ENCODE measurements at regions of chr14 and their contacts with region 1.

Region 1: DNA sequence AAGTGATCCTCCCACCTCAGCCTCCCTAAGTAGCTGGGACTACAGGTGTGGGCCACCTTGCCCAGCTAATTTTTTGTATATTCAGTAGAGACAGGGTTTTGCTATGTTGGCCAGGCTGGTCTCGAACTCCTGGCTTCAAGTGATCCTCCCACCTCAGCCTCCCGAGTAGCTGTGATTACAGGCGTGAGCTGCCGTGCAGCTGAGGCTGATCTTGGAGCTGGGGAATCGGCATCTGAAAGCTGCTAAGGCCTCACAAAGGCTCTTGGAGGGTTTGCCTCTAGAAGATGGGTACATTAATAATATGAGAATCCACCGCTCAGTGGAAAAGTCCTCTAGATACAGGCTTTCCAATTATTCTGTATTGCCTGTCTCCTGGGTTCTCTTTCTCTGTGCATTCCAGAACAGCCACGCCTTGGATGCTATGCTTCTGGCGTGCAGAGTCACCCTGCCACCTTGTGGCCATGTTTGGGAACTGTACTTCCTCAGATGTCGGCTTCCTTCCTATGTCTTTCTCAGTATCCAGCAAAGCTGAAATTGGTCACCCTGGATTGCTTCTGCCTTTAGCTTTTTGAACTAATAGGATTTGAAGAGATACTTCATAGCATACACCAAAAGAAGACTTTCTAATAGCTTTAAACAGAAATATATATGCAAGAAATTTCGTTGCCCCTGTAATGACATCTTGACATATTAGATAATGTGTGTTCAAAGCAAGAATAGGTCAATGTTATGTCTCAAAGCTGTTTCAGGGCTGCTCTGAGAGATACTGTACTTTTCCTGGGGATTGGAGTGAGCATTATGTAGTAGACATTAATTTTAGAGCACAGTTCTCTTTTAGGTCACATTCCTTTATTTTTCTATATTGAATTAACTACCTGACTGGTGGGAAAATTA is 75.4 kb downstream of the SNAPC1 start:
- DNase-seq: peak; percentile 80
- ATAC-seq: peak; percentile 92
- H3K4me3 ChIP-seq: no peak overlapping the region
- H3K27ac ChIP-seq: no peak overlapping the region
- H3K4me1 ChIP-seq: no peaks in the 10 kb centered on the region; the same call in 1 of the 2 replicates
- H3K27me3 ChIP-seq: no peaks in the 10 kb centered on the region
- CTCF ChIP-seq: peak; percentile 95
- POLR2A ChIP-seq: 0 out of 2 replicates have a peak, but pooled peaks have one; percentile 39
- RAD21 ChIP-seq: peak; percentile 98

Region 2: DNA sequence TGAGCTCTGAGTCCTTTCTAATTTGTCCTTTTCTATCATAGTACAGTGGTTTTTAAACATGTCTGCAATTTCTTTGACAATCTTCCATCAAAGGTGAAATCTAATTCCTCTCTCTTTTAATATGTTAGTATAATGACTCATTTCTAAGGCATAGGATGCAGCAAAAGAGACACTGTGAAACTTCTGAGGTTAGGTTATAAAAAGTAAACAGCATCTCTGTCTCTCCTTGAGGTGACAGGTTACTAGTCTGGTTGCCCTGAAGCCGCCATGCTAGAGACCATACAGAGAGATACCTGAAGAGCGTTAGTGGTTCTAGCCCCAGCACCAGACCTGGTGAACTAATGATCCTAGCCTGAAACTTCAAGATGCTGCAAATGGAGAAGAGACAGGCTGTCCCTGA is 1474.3 kb before region 1 on chr14:
- CTCF ChIA-PET with region 1: no interaction called
- POLR2A ChIA-PET with region 1: no interaction called
- dilution Hi-C with region 1: no loop called
- in situ Hi-C with region 1: no loop called
- intact Hi-C with region 1: loop called (anchors 10 kb)
- DNase-seq: no peak
- ATAC-seq: no peak
- H3K4me3 ChIP-seq: no peak overlapping the region
- H3K27ac ChIP-seq: no peak overlapping the region
- H3K4me1 ChIP-seq: no peaks in the 10 kb centered on the region
- H3K27me3 ChIP-seq: peaks cover 2% of the 10 kb centered on the region
- CTCF ChIP-seq: no peak
- POLR2A ChIP-seq: no peak
- RAD21 ChIP-seq: no peak

Region 3: DNA sequence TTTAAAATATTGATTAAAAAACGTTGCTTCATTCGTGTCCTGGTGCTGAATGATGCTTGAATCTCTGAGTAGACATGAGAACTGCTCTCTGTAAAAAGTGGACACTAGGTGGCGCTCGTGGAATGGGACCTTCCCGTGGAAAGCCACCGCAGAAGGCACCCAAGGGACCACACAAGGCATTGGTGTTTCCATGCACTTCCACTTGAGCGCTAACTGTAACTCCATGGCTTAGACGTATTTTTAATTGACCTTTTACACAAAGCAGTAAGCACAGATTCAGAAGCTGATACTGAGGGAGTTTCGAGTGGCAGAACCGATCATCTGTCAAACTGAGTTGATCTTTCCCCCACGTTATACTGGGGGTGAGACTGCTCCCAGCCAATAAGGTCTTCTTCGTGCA is 380.9 kb before region 1 on chr14:
- CTCF ChIA-PET with region 1: interaction called, 16 read pairs
- POLR2A ChIA-PET with region 1: no interaction called
- dilution Hi-C with region 1: no loop called
- in situ Hi-C with region 1: loop called (anchors 5 kb)
- intact Hi-C with region 1: loop called (anchors 1 kb)
- DNase-seq: peak; percentile 73
- ATAC-seq: peak; percentile 91
- H3K4me3 ChIP-seq: no peak overlapping the region
- H3K27ac ChIP-seq: no peak overlapping the region
- H3K4me1 ChIP-seq: no peaks in the 10 kb centered on the region
- H3K27me3 ChIP-seq: peaks cover 19% of the 10 kb centered on the region
- CTCF ChIP-seq: peak; percentile 87
- POLR2A ChIP-seq: peak; percentile 35; the same call in 1 of the 2 replicates
- RAD21 ChIP-seq: peak; percentile 91

Region 4: GRCh38 chr14:61553725-61554641 is 283.6 kb before region 1 on chr14:
- CTCF ChIA-PET with region 1: no interaction called
- POLR2A ChIA-PET with region 1: no interaction called
- dilution Hi-C with region 1: no loop called
- in situ Hi-C with region 1: no loop called
- intact Hi-C with region 1: loop called (anchors 10 kb)
- DNase-seq: peak; percentile 98
- ATAC-seq: peak; percentile 88
- H3K4me3 ChIP-seq: no peak overlapping the region
- H3K27ac ChIP-seq: peak overlapping the region; percentile 93
- H3K4me1 ChIP-seq: peaks cover 30% of the 10 kb centered on the region
- H3K27me3 ChIP-seq: no peaks in the 10 kb centered on the region
- CTCF ChIP-seq: no peak
- POLR2A ChIP-seq: no peak
- RAD21 ChIP-seq: peak; percentile 38

Region 5: DNA sequence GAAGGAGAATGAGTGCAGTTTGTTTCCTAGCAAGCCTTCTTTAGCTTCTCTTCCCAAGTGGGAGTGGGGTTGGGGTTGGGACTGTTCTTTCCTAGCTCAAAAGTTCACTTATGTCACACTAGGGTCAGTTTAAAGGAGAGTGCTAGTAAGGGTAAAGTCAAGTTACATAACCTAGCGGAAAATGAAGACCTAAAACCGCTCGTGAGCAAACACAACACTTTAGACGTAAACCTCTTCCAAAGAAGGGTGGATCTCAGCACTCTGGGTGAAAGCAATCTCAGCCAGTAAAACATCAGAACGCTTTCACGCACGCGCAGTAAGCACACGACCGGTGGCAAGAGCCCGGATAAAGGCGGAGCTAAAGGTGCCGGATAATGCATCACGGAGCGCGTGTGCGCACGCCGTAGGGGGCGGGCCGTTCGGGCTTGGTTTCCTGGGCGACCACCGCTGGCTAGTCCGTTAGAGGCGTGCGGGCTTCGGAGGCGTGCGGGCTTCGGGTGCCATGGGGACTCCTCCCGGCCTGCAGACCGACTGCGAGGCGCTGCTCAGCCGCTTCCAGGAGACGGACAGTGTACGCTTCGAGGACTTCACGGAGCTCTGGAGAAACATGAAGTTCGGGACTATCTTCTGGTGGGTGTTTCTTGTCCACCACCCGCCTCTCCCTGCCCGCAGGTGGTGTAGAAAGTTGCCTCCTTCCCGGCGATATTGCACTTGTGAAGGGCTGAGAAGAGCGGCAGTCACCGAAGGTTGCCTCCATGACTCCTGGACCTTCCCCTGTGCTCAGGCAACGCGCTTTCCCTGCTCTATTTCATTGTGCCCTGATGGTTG is 75.4 kb before region 1 on chr14 and contains the start of gene SNAPC1:
- CTCF ChIA-PET with region 1: interaction called, 4 read pairs
- POLR2A ChIA-PET with region 1: no interaction called
- dilution Hi-C with region 1: no loop called
- in situ Hi-C with region 1: no loop called
- intact Hi-C with region 1: loop called (anchors 2 kb)
- DNase-seq: peak; percentile 97
- ATAC-seq: peak; percentile 99
- H3K4me3 ChIP-seq: peak within 1 kb of the TSS; percentile 82
- H3K27ac ChIP-seq: peak within 1 kb of the TSS; percentile 74
- H3K4me1 ChIP-seq: peaks cover 8% of the 10 kb centered on the region
- H3K27me3 ChIP-seq: no peaks in the 10 kb centered on the region
- CTCF ChIP-seq: no peak
- POLR2A ChIP-seq: peak; percentile 92
- RAD21 ChIP-seq: no peak
- total RNA-seq, gene SNAPC1: 7.7 and 18.9 TPM in 2 replicates

Region 6: DNA sequence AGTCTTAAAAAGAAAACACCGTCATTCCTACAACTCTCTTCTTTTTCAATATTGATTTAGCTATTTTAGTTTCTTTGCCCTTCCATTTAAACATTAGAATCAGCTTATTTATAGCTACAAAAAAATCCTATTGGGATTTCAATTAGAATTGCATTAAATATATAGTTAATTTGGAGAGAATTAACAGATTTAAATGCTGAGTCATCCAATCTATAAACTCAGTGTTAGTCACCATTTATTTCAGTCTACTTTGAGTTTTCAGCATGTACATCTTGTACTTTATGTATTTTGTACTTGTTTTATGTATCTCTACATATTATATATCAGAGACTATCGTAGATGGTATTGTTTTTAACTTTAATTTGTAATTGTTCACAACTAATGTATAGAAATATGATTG is 747.7 kb after region 1 on chr14:
- CTCF ChIA-PET with region 1: no interaction called
- POLR2A ChIA-PET with region 1: no interaction called
- dilution Hi-C with region 1: no loop called
- in situ Hi-C with region 1: no loop called
- intact Hi-C with region 1: no loop called
- DNase-seq: no peak
- ATAC-seq: no peak
- H3K4me3 ChIP-seq: no peak overlapping the region
- H3K27ac ChIP-seq: no peak overlapping the region
- H3K4me1 ChIP-seq: no peaks in the 10 kb centered on the region
- H3K27me3 ChIP-seq: no peaks in the 10 kb centered on the region
- CTCF ChIP-seq: no peak
- POLR2A ChIP-seq: no peak
- RAD21 ChIP-seq: no peak

Measured in IMR-90 (cell line).